Ascending aorta (tissue), 2 donors: ENCODE measurements at regions of chr20 and their contacts with region 1.

Region 1: DNA sequence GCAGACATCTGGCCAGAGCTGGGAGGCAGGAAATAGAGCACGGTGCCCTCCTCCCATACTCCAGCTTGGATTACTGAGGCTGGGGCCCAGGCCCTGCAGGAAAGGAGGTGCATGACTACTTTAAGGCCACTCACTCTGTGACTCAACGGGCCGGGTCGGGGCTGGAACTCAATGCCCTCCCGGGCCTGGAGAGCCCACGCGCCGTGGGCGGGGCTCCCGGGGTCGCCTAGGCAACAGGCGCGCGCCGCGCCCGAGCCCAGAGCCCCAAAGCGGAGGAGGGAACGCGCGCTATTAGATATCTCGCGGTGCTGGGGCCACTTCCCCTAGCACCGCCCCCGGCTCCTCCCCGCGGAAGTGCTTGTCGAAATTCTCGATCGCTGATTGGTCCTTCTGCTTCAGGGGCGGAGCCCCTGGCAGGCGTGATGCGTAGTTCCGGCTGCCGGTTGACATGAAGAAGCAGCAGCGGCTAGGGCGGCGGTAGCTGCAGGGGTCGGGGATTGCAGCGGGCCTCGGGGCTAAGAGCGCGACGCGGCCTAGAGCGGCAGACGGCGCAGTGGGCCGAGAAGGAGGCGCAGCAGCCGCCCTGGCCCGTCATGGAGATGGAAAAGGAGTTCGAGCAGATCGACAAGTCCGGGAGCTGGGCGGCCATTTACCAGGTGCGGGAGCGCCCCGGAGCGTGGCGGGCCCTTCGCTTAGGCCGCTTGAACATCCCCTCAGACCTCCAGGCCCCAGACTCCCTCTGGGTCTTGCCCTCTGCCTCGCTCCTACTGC is at the start of gene PTPN1:
- DNase-seq: peak; percentile 93 to 99
- H3K4me3 ChIP-seq: peak within 1 kb of the TSS; percentile 88 to 97
- H3K27ac ChIP-seq: peak within 1 kb of the TSS; percentile 81 to 91
- H3K4me1 ChIP-seq: peaks cover 5 to 25% of the 10 kb centered on the region in 2 donors
- H3K27me3 ChIP-seq: no peaks in the 10 kb centered on the region
- CTCF ChIP-seq: peak in 2 of 3 experiments; percentile 7 to 34
- total RNA-seq, gene PTPN1: 30.2 TPM

Region 2: GRCh38 chr20:49046087-49046900 is 1463.8 kb before region 1 on chr20 and contains the start of gene CSE1L:
- intact Hi-C with region 1: loop called (anchors 5 kb)
- DNase-seq: peak; percentile 87 to 96
- H3K4me3 ChIP-seq: peak within 1 kb of the TSS; percentile 91 to 98
- H3K27ac ChIP-seq: peak within 1 kb of the TSS; percentile 88 to 95
- H3K4me1 ChIP-seq: peaks cover 6 to 15% of the 10 kb centered on the region in 2 donors
- H3K27me3 ChIP-seq: no peaks in the 10 kb centered on the region
- CTCF ChIP-seq: peak in 1 of 3 experiments; percentile 27
- total RNA-seq, gene CSE1L: 13.6 TPM

Region 3: GRCh38 chr20:50484276-50484976 is 25.7 kb before region 1 on chr20:
- intact Hi-C with region 1: loop called (anchors 2 kb)
- DNase-seq: no peak
- H3K4me3 ChIP-seq: peak overlapping the region; percentile 54 to 64
- H3K27ac ChIP-seq: peak overlapping the region; percentile 74 to 77
- H3K4me1 ChIP-seq: peaks cover 0 to 3% of the 10 kb centered on the region in 2 donors
- H3K27me3 ChIP-seq: no peaks in the 10 kb centered on the region
- CTCF ChIP-seq: no peak

Region 4: DNA sequence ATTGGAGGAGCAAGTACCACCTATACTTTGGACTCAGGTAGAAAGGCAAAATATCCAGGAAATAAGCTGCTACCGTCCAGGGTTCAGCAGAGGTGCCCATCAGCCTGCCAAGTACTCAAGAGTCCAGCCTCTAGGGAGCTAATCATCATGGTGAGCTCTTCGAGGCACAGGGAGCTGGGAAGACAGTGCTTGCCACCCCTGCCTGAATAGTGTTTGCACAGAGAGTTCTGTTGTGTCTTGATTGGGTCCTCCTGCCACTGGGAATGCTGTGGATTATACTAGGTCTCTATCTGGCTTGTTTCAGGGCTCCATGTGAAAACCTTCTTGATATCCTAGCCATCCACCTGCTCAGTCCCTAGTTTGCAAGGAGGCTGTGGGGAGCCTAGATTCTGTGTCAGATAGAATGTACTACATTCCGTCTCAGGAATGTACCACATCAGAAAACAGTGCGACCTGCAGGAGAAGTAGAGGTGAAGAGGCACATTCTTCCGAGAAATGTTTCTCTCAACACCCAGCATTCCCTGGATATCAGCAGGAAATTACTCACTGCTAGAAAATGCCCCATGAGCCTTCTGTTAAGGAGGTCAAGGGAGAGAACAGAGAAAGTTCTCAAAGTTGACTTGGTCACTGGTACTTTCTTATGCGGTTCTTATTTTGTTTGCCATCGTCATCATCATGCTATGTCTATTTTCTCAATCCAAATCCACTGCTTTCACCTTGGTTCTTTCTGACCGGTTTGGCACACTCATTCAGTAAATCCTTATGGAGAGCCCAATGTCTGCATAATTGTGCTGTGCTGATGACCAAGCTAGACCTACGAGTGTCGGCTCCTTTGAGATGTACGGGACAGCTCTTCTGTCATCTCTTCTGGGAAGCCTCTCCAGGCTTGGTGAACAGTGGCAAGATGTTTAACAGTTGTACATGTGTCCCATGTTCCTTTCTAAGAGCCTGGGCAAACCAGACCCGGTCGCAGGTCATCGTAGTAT is 30.8 kb after region 1 on chr20:
- intact Hi-C with region 1: loop called (anchors 1 kb)
- DNase-seq: peak in 1 of 2 donors; percentile 80
- H3K4me3 ChIP-seq: peak overlapping the region; percentile 24 to 28
- H3K27ac ChIP-seq: peak overlapping the region; percentile 81 to 94
- H3K4me1 ChIP-seq: peaks cover 16 to 42% of the 10 kb centered on the region in 2 donors
- H3K27me3 ChIP-seq: no peaks in the 10 kb centered on the region
- CTCF ChIP-seq: no peak

Region 5: DNA sequence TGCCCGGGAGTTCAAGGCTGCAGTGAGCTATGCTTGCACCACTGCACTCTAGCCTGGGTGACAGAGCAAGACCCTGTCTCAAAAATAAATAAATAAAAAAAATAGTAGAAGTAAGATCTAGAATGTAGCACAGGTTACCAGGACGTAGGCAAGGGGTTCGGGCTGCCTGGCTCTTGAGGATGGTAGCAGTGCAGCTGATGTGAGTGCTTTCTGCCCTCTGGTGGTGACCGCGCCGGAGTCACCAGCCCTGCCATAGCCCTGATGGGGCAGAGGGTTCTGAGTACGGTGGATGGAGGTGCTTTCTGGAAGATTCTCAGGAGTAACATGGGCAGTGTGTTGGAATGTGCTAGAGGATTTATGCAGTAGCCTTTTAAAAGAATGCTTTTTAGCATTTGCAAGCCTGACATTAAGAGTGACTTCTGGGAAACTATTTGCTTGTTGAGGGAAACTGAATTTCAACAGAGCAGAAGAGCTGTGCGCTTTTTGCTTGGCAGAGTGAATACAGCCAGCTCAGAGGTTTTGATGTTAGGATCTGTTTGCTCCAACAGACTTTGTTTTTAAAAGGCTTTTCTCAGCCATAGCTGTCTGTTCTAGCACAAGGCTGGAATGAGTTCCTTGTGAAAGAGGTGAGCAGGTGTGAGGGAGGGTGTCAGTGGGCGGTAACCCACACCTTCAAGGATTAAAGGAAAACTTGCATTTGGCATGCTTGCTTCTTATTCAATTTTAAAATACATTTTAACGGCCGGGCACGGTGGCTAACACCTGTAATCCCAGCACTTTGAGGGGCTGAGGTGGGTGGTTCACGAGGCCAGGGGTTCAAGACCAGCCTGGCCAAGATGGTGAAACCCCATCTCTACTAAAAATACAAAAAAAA is 66.0 kb after region 1 on chr20:
- intact Hi-C with region 1: loop called (anchors 1 kb)
- DNase-seq: peak in 1 of 2 donors; percentile 78
- H3K4me3 ChIP-seq: no peak overlapping the region
- H3K27ac ChIP-seq: peak overlapping the region in 1 of 2 donors; percentile 38
- H3K4me1 ChIP-seq: peaks cover 12 to 23% of the 10 kb centered on the region in 2 donors
- H3K27me3 ChIP-seq: no peaks in the 10 kb centered on the region
- CTCF ChIP-seq: peak; percentile 45 to 75 (median 65)

Region 6: DNA sequence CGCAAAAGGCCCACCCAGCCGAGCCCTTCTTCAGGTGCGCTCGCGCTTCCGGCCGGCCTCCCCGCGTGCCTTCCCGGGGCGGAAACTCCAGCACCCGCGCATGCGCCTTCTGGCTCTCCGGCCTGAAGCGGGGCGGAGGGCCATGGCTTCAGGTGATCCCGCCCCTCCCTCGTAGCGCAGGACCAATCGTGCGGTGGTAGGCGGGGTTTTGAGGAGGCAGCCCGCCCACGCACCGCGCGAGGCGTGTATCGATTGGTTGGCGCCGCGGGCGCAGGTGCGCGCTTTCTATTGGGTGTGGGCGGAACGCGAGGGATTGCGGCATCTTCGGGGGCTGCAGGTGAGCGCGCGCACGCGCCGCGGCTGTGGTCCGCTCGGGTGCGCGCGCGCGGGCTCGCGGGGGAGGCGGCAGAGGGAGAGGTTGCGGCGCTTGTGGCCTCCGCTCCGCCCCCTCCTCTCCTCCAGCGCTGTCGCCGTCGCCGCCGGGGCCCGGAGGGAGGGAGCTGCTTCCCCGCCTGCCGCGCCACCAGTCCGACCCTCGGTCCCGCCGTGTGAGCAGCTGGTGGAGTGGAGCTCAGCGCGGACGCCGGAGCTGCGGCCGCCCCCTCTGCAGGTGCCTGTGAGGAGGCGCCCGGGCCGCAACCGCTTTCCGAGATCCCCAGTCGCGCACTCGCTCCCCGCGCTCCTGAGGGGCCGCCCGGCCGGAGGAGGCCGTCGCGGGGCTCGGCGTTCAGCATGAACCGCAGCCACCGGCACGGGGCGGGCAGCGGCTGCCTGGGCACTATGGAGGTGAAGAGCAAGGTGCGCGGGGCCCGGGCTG is 221.1 kb after region 1 on chr20 and contains the start of gene PARD6B:
- intact Hi-C with region 1: loop called (anchors 10 kb)
- DNase-seq: peak; percentile 93 to 98
- H3K4me3 ChIP-seq: peak within 1 kb of the TSS; percentile 66 to 89
- H3K27ac ChIP-seq: peak within 1 kb of the TSS; percentile 71 to 88
- H3K4me1 ChIP-seq: peaks cover 8 to 13% of the 10 kb centered on the region in 2 donors
- H3K27me3 ChIP-seq: no peaks in the 10 kb centered on the region
- CTCF ChIP-seq: no peak
- total RNA-seq, gene PARD6B: 1.2 TPM